ENCODE measurements at regions of chr14 and their contacts with region 1.

Region 1: GRCh38 chr14:81269100-81269978 is 48.6 kb upstream of the GTF2A1 start:
- DNase-seq: peak; percentile 39
- ATAC-seq: peak; percentile 70
- H3K4me3 Mint-ChIP-seq: no peak overlapping the region
- H3K27ac Mint-ChIP-seq: no peak overlapping the region
- H3K4me1 Mint-ChIP-seq: peaks cover 9% of the 10 kb centered on the region
- H3K27me3 Mint-ChIP-seq: peaks cover 27% of the 10 kb centered on the region

Region 2: GRCh38 chr14:81252273-81252672 is 17.1 kb before region 1 on chr14:
- CTCF ChIA-PET with region 1: interaction called, 13 read pairs
- POLR2A ChIA-PET with region 1: no interaction called
- DNase-seq: no peak
- ATAC-seq: no peak
- H3K4me3 Mint-ChIP-seq: no peak overlapping the region
- H3K27ac Mint-ChIP-seq: no peak overlapping the region
- H3K4me1 Mint-ChIP-seq: no peaks in the 10 kb centered on the region
- H3K27me3 Mint-ChIP-seq: no peaks in the 10 kb centered on the region

Region 3: GRCh38 chr14:81453166-81453766 is 183.9 kb after region 1 on chr14:
- CTCF ChIA-PET with region 1: interaction called, 71 read pairs
- POLR2A ChIA-PET with region 1: no interaction called
- DNase-seq: peak; percentile 67
- ATAC-seq: peak; percentile 74
- H3K4me3 Mint-ChIP-seq: no peak overlapping the region
- H3K27ac Mint-ChIP-seq: no peak overlapping the region
- H3K4me1 Mint-ChIP-seq: peaks cover 10% of the 10 kb centered on the region
- H3K27me3 Mint-ChIP-seq: peaks cover 19% of the 10 kb centered on the region

Measured in activated CD8-positive, alpha-beta T cell treated with anti-CD3 and anti-CD28 coated beads, Interleukin-2, amount 10 ng/mL, durations not matched to agents 7 days and 5 days (primary cell).